ENCODE measurements at regions of chr9 and their contacts with region 1.

Region 1: DNA sequence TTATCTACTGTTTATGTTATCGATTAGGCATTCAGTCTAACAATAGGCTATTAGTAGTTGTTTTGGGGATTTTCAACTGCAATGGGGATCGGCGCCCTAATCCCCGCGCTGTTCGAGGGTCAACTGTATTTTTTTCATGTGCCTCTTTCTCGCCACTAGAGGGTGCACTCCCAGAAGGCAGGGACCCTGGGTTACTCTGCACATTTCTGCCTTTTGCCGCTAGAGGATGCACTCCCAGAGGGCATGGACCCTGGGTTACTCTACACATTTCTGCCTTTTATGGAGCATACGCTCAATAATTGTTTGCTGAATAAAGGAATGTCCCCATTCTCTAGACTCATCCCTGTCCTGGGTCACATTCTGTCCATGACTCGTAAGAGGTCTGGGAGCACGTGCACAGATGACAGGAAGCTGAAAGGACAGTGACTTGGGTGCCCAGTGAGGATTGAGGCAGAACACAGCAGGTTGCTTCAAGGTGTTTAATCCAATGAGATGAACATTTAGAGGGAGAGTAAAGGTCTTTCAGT is 27.9 kb upstream of the RECK start:
- DNase-seq: peak; percentile 82
- H3K4me3 Mint-ChIP-seq: no peak overlapping the region
- H3K27ac Mint-ChIP-seq: no peak overlapping the region
- H3K4me1 Mint-ChIP-seq: no peaks in the 10 kb centered on the region
- H3K27me3 Mint-ChIP-seq: peaks cover 97% of the 10 kb centered on the region
- CTCF ChIP-seq: peak; percentile 98

Region 2: DNA sequence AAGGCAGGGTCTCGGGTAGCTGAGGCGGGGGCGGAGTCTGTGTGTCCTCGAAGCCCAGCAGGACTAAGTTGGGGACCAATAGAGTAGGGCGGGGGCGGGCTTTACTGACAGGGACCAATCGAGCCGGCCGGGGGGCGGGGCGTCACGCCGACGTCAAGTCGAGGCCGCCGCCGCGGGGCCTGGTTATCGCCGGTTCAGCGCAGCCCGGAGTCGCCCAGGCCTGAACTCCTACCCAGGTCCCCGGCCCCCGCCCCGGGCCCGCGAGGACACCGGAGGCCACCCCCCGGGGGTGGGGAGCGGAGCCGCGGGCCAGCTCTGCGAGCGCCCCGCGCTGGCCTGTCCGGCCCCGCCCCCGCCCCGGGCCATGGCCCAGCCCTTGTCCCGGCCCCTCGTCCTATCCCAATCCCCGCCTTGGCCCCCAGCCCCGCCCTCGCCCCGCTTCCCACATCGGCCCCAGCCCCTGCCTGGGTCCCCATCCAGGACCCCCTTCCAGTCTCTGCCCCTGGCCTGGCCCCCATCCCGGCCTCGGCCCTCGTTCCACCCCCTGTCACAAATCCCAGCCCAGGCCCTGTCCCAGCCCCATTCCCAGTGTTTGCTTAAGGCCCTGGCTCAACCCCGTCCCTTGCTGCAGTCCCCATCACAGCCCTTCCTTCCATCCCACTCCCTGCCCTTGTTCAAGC is 179.6 kb before region 1 on chr9 and contains the start of gene TMEM8B:
- CTCF ChIA-PET with region 1: no interaction called
- POLR2A ChIA-PET with region 1: no interaction called
- intact Hi-C with region 1: no loop called
- DNase-seq: peak; percentile 91
- H3K4me3 Mint-ChIP-seq: peak within 1 kb of the TSS; percentile 81
- H3K27ac Mint-ChIP-seq: peak within 1 kb of the TSS; percentile 71
- H3K4me1 Mint-ChIP-seq: peaks cover 41% of the 10 kb centered on the region
- H3K27me3 Mint-ChIP-seq: no peaks in the 10 kb centered on the region
- CTCF ChIP-seq: no peak
- total RNA-seq, gene TMEM8B: 4.6 and 7.0 TPM in 2 replicates

Region 3: DNA sequence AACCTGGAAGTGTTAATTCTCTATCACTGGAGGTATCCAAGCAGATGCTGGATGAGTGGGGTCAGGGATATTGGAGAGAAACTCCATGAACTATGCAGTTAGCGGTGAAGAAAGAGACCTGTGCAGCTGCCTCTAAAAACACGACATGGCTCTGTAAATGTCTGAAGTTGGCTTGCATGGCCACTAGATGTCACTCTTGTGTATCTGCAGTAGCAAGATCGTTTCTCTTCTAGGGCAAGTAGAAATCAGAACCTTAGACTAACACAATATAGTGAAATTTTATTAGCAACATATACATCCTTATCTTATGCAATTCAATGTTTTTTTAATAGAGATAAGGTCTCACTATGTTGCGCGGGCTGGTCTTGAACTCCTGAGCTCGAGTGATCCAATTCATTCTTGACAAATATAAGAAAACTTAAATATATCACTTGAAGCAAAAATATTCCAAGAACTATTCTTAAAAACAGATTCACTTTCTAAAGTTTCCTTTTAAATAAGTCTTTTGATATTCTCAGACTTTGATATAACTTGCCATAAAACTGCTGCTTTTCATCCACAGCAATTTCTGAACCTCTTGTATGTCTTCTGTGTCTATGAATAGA is 53.8 kb before region 1 on chr9:
- CTCF ChIA-PET with region 1: interaction called, 14 read pairs
- POLR2A ChIA-PET with region 1: no interaction called
- intact Hi-C with region 1: loop called (anchors 5 kb)
- DNase-seq: peak; percentile 72
- H3K4me3 Mint-ChIP-seq: no peak overlapping the region
- H3K27ac Mint-ChIP-seq: no peak overlapping the region
- H3K4me1 Mint-ChIP-seq: peaks cover 7% of the 10 kb centered on the region
- H3K27me3 Mint-ChIP-seq: peaks cover 31% of the 10 kb centered on the region
- CTCF ChIP-seq: peak; percentile 83

Region 4: GRCh38 chr9:35960039-35960655 is 48.7 kb before region 1 on chr9:
- CTCF ChIA-PET with region 1: interaction called, 14 read pairs
- POLR2A ChIA-PET with region 1: no interaction called
- intact Hi-C with region 1: loop called (anchors 5 kb)
- DNase-seq: no peak
- H3K4me3 Mint-ChIP-seq: no peak overlapping the region
- H3K27ac Mint-ChIP-seq: no peak overlapping the region
- H3K4me1 Mint-ChIP-seq: peaks cover 6% of the 10 kb centered on the region
- H3K27me3 Mint-ChIP-seq: peaks cover 76% of the 10 kb centered on the region
- CTCF ChIP-seq: no peak

Region 5: GRCh38 chr9:35996358-35996975 is 12.4 kb before region 1 on chr9:
- CTCF ChIA-PET with region 1: interaction called, 19 read pairs
- POLR2A ChIA-PET with region 1: interaction called, 5 read pairs
- intact Hi-C with region 1: no loop called
- DNase-seq: peak; percentile 35
- H3K4me3 Mint-ChIP-seq: no peak overlapping the region
- H3K27ac Mint-ChIP-seq: no peak overlapping the region
- H3K4me1 Mint-ChIP-seq: no peaks in the 10 kb centered on the region
- H3K27me3 Mint-ChIP-seq: peaks cover 49% of the 10 kb centered on the region
- CTCF ChIP-seq: no peak

Region 6: DNA sequence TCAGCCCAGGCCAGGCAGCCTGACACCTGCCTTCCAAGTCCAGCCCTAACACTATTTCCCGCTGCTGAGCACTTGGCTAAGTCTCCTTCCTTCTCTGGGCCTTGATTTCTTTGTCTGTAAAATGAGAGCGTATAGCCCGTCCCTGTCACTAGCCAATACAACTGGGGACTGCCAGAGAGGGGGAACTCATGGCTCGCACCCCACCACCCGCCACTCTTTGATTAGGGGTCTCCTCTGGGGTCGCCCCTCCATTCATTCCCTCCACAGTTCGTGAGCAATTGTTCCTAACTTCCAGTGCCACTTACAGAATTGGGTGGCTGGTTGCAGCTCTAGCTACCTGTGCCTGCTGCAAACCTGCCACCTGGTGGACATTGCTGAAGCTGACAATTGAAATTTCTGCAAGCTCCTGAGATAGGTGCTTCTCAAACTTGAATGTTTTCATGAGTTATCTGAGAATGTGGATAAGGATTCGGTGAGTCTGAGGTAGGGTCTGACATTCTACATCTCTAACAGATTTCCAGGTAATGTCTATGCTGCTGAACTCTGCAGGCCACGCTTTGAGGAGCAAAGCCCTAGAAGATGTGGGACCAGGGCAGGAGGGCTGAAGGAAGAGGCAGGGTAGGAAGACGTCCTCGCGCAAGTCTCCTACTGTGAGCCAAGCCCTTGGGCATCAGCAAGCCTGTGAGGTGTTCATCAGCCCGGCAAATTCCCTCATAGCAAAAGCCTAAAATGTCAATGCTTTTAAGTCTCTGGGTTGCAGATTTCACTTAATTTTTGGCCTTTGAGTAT is 14.6 kb after region 1 on chr9:
- CTCF ChIA-PET with region 1: interaction called, 75 read pairs
- POLR2A ChIA-PET with region 1: interaction called, 5 read pairs
- intact Hi-C with region 1: loop called (anchors 2 kb)
- DNase-seq: peak; percentile 74
- H3K4me3 Mint-ChIP-seq: no peak overlapping the region
- H3K27ac Mint-ChIP-seq: no peak overlapping the region
- H3K4me1 Mint-ChIP-seq: peaks cover 6% of the 10 kb centered on the region
- H3K27me3 Mint-ChIP-seq: peaks cover 12% of the 10 kb centered on the region
- CTCF ChIP-seq: peak; percentile 84

Region 7: DNA sequence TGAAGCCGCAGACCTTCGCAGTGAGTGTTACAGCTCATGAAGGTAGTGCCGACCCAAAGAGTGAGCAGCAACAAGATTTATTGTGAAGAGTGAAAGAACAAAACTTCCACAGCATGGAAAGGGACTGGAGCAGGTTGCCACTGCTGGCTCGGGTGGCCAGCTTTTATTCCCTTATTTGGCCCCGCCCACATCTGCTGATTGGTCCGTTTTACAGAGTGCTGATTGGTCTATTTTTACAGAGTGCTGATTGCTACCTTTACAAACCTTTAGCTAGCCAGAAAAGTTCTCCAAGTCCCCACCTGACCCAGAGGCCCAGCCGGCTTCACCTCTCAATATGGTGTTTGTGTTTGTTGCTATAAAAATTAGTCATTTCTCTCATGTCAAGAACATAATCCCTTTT is 77.6 kb after region 1 on chr9:
- CTCF ChIA-PET with region 1: no interaction called
- POLR2A ChIA-PET with region 1: no interaction called
- intact Hi-C with region 1: no loop called
- DNase-seq: no peak
- H3K4me3 Mint-ChIP-seq: no peak overlapping the region
- H3K27ac Mint-ChIP-seq: no peak overlapping the region
- H3K4me1 Mint-ChIP-seq: no peaks in the 10 kb centered on the region
- H3K27me3 Mint-ChIP-seq: no peaks in the 10 kb centered on the region
- CTCF ChIP-seq: no peak

Region 8: DNA sequence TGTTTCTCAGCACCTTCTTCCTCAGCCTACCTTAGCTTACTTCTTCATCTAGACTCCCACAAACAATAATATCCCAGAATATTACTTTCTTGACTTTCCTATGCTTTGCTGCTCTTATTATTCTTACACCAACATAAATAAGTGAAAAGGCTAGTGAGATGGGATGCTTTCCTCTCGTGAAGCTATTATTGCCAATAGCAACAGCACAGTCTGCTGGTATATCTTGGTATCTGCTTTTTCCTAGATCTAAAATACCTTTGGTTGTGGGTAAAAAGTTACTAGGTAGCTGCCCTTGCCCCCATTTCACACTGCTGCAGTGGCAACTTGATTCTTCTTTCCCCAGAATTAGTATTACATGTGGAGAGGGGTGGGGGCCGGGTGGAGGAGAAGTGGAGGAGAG is 101.6 kb after region 1 on chr9:
- CTCF ChIA-PET with region 1: interaction called, 10 read pairs
- POLR2A ChIA-PET with region 1: no interaction called
- intact Hi-C with region 1: no loop called
- DNase-seq: no peak
- H3K4me3 Mint-ChIP-seq: no peak overlapping the region
- H3K27ac Mint-ChIP-seq: no peak overlapping the region
- H3K4me1 Mint-ChIP-seq: no peaks in the 10 kb centered on the region
- H3K27me3 Mint-ChIP-seq: no peaks in the 10 kb centered on the region
- CTCF ChIP-seq: no peak

Region 9: GRCh38 chr9:36166101-36166927 is 157.5 kb after region 1 on chr9:
- CTCF ChIA-PET with region 1: interaction called, 56 read pairs
- POLR2A ChIA-PET with region 1: no interaction called
- intact Hi-C with region 1: loop called (anchors 1 kb)
- DNase-seq: peak; percentile 72
- H3K4me3 Mint-ChIP-seq: peak overlapping the region; percentile 63
- H3K27ac Mint-ChIP-seq: no peak overlapping the region
- H3K4me1 Mint-ChIP-seq: peaks cover 3% of the 10 kb centered on the region
- H3K27me3 Mint-ChIP-seq: no peaks in the 10 kb centered on the region
- CTCF ChIP-seq: peak; percentile 90